ENCODE measurements at regions of chr12 and their contacts with region 1.

Region 1: GRCh38 chr12:50111693-50112455 is at the start of gene COX14:
- DNase-seq: peak; percentile 97

Region 2: DNA sequence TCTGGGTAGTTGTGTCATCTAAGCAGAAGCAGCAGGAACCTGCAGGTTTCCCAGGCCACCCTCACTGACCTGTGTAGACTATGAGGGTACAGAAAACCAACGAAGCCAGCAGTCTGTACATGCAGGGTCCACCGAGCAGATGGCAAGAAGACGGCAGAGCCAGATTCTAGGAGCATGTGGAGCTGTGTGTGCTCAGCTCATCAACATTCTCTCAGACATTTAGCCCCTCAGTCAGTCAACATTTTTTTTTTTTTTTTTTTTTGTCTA is 61.8 kb before region 1 on chr12:
- CTCF ChIA-PET with region 1: no interaction called
- POLR2A ChIA-PET with region 1: no interaction called
- DNase-seq: no peak

Region 3: DNA sequence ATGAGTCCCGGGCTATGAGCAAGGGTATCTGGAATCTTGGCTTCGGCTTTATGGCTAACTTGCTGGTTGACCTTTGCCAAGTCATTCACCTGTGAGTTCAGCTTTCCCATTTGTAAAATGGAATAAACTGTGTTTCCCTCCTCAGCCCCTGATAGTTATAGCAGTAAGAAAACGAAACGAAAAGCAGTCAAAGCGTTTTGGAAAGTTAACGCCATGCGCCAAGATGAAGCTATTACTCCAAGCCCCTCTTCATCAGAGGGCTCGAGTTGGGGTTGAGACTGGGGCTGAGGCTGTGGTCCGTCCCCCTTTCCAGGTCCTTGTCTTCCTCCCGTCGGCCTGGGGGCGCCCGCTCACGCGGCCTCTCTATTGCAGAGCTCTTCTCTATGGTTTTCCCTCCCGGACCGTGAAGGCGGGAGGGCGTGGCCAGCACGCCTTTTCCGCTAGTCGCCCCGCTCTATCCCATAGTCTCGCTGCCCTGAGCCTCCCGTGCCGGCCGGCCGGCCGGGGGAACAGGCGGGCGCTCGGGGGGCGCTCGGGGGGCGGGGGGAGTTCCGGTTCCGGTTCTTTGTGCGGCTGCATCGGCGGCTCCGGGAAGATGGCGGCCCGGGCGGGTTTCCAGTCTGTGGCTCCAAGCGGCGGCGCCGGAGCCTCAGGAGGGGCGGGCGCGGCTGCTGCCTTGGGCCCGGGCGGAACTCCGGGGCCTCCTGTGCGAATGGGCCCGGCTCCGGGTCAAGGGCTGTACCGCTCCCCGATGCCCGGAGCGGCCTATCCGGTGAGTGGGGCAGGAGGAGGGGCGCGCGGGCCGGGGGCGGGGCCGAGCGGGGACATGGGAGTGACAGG is 26.9 kb before region 1 on chr12 and contains the start of gene SMARCD1:
- CTCF ChIA-PET with region 1: interaction called, 16 read pairs
- POLR2A ChIA-PET with region 1: interaction called, 56 read pairs
- DNase-seq: peak; percentile 88

Region 4: DNA sequence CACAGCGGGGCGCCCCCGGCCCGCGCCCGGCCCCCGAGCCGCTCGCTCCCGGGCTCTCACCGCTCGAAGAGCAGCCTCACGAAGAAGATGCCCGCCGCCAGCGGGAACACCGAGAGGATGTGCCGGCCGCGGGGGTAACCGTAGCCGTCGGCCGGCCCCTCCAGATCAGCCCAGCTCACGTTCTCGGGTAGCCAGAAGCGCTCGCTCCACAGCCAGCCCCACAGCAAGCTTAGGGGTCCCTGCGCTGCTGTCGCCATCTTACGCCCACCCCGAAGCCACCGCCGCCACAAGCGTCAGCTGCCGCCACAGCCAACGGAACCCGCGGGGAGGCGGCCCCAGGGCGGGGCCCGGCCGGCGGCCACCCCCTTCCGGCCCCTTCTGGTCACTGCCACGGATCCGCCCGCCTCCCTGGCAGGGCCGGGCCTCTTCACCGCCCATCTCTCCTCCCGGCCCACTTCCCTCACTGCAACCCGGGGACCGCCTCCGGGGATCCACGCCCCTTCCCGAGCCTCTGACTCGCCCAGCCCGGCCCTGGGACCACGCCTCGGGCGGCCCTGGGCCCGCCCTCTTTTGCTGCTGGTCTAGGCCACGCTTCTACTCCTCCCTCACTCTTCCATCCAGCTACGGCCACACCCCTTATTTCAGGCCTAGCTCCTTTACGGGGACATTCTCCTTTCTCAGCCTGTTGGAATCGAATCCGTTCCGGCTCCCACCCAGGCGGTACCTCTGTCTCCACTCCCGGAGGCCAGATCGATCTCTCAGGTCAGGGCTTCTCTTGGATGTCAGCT is 55.4 kb after region 1 on chr12 and contains the start of gene CERS5:
- CTCF ChIA-PET with region 1: interaction called, 16 read pairs
- POLR2A ChIA-PET with region 1: interaction called, 56 read pairs
- DNase-seq: peak; percentile 96

Region 5: GRCh38 chr12:50174971-50175715 is 63.3 kb after region 1 on chr12:
- CTCF ChIA-PET with region 1: interaction called, 12 read pairs
- POLR2A ChIA-PET with region 1: interaction called, 10 read pairs
- DNase-seq: peak; percentile 45

Region 6: DNA sequence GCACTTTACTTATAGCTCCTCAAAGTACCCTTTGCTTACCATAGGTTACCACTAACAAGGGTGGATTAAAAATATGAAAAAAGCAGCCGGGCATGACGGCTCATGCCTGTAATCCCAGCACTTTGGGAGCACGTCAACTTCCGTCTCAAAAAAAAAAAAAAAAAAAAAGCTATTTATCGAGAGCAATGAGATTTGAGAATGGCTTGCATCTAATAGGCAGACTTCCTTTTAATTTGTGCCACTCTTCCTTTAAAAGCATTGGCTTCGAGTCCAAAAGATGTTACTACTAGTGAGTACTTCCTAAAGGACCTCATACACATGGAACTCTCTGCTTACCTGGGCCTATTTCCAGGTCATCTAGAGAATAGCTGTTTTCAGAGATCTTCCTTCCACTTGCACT is 93.8 kb after region 1 on chr12:
- CTCF ChIA-PET with region 1: interaction called, 11 read pairs
- POLR2A ChIA-PET with region 1: no interaction called
- DNase-seq: no peak

Region 7: DNA sequence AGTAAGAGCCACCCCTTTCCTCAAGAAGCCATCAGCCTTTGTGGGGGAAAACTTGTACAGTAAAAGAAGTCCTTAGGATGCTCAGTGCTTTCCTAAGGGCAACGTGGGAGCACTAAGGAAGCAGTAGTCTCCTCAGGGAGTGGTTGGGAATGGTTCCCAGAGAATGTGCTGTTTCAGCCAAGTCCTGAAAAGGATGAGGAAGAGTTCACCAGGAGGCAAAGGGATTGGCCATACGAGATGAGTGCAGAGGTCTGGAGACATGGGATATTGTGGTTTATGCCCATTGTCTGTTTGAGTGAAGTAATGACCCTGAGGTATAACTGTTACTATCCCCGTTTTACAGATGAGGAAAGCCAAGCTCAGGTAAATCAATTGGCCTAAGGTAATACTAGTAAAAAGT is 566.0 kb after region 1 on chr12:
- CTCF ChIA-PET with region 1: no interaction called
- POLR2A ChIA-PET with region 1: no interaction called
- DNase-seq: no peak